AG04450 (cell line): ENCODE measurements at regions of chr6 and their contacts with region 1.

Region 1: GRCh38 chr6:14258695-14259593 is 141.4 kb downstream of the CD83 start:
- DNase-seq: no peak
- H3K4me3 ChIP-seq: no peak overlapping the region
- H3K27ac ChIP-seq: no peak overlapping the region
- H3K27me3 ChIP-seq: peaks cover 6% of the 10 kb centered on the region
- CTCF ChIP-seq: no peak

Region 2: GRCh38 chr6:14232889-14233288 is 26.1 kb before region 1 on chr6:
- CTCF ChIA-PET with region 1: interaction called, 10 read pairs
- POLR2A ChIA-PET with region 1: no interaction called
- DNase-seq: no peak
- H3K4me3 ChIP-seq: no peak overlapping the region
- H3K27ac ChIP-seq: no peak overlapping the region
- H3K27me3 ChIP-seq: peaks cover 10% of the 10 kb centered on the region
- CTCF ChIP-seq: no peak